Psoas muscle (tissue), 8 donors: ENCODE measurements at regions of chr15 and their contacts with region 1.

Region 1: GRCh38 chr15:36567445-36567844 is 12.0 kb upstream of the CDIN1 start:
- DNase-seq: no peak
- ATAC-seq: no peak
- H3K4me3 ChIP-seq: no peak overlapping the region
- H3K27ac ChIP-seq: no peak overlapping the region
- H3K4me1 ChIP-seq: peaks cover 17% of the 10 kb centered on the region
- H3K27me3 ChIP-seq: no peaks in the 10 kb centered on the region
- CTCF ChIP-seq: no peak

Region 2: GRCh38 chr15:36529296-36530011 is 38.0 kb before region 1 on chr15:
- intact Hi-C with region 1: loop called in 1 of 2 experiments (anchors 5 kb)
- DNase-seq: no peak
- ATAC-seq: no peak
- H3K4me3 ChIP-seq: no peak overlapping the region
- H3K27ac ChIP-seq: no peak overlapping the region
- H3K4me1 ChIP-seq: no peaks in the 10 kb centered on the region
- H3K27me3 ChIP-seq: no peaks in the 10 kb centered on the region
- CTCF ChIP-seq: no peak